ENCODE measurements at regions of chr4 and their contacts with region 1.

Region 1: GRCh38 chr4:142265536-142265935 is 580.6 kb downstream of the INPP4B start:
- DNase-seq: no peak
- ATAC-seq: peak; percentile 73

Region 2: DNA sequence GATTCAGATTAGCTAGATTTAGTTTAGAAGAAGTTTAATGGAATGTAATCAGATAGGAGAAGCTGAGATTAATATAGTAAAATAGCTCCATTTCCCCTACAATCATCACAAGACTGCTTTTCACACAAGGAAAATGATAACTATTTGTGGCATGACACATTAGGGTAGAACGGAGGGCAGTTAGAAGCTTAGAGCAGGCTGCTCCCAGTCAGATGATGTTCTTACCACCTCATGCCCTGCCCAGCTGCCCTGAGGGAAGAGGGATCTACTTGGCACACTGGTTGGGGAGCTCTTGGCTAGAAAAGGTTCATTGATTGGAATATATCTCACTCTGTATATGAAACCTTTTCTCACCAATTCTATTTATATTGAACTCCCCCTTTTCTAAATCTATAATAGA is 809.9 kb before region 1 on chr4:
- intact Hi-C with region 1: no loop called
- DNase-seq: no peak
- ATAC-seq: no peak

Region 3: GRCh38 chr4:142126890-142127497 is 138.5 kb before region 1 on chr4:
- intact Hi-C with region 1: loop called (anchors 10 kb)
- DNase-seq: no peak
- ATAC-seq: peak; percentile 34

Measured in Right ventricle myocardium inferior (tissue), 1 donor.